H1 (cell line): ENCODE measurements at regions of chr1 and their contacts with region 1.

Region 1: GRCh38 chr1:236141305-236141929 is 922 bp upstream of the GPR137B start:
- DNase-seq: peak in 1 of 2 experiments; percentile 65
- H3K4me3 ChIP-seq: peak overlapping the region; percentile 53 to 93 (median 69)
- H3K27ac ChIP-seq: no peak overlapping the region
- H3K4me1 ChIP-seq: peaks cover 6 to 11% (median 9%) of the 10 kb centered on the region in 4 experiments
- H3K27me3 ChIP-seq: peaks cover 14 to 50% (median 38%) of the 10 kb centered on the region in 4 experiments
- CTCF ChIP-seq: no peak
- EP300 ChIP-seq: no peak
- POLR2A ChIP-seq: no peak
- RAD21 ChIP-seq: no peak

Region 2: GRCh38 chr1:236113324-236114032 is 27.9 kb before region 1 on chr1:
- CTCF ChIA-PET with region 1: interaction called, 22 read pairs
- POLR2A ChIA-PET with region 1: no interaction called
- DNase-seq: no peak
- H3K4me3 ChIP-seq: no peak overlapping the region
- H3K27ac ChIP-seq: no peak overlapping the region
- H3K4me1 ChIP-seq: no peaks in the 10 kb centered on the region
- H3K27me3 ChIP-seq: no peaks in the 10 kb centered on the region
- CTCF ChIP-seq: no peak
- EP300 ChIP-seq: no peak
- POLR2A ChIP-seq: no peak
- RAD21 ChIP-seq: no peak

Region 3: DNA sequence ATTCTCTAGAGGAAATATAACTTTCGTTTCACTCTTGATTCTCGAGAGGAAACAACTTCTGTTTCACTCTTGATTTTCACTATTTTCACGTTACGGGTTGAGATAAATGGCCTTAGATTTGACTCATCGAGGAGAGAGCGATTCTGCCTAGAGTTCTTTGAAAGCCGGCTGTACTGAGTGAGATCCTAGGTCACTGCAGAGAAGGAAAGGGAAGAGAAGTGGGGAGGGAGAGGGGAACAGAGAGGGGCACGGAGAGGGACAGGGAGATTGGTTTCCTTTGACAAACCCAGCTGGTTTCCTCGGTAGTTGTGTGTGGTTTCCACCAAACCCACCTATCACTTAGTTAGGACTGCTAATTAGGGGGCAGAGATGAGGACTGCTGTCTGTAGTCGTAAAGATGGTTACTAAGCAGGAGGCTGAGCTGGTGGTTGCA is 20.7 kb before region 1 on chr1:
- CTCF ChIA-PET with region 1: interaction called, 35 read pairs
- POLR2A ChIA-PET with region 1: interaction called, 4 read pairs
- DNase-seq: no peak
- H3K4me3 ChIP-seq: no peak overlapping the region
- H3K27ac ChIP-seq: no peak overlapping the region
- H3K4me1 ChIP-seq: no peaks in the 10 kb centered on the region
- H3K27me3 ChIP-seq: no peaks in the 10 kb centered on the region
- CTCF ChIP-seq: no peak
- EP300 ChIP-seq: no peak
- POLR2A ChIP-seq: no peak
- RAD21 ChIP-seq: no peak